A549 (cell line): ENCODE measurements at regions of chr5 and their contacts with region 1.

Region 1: GRCh38 chr5:55146543-55147151 is 13.3 kb upstream of the GPX8 start:
- DNase-seq: peak; percentile 49 to 82
- ATAC-seq: peak; percentile 92 to 98
- H3K4me3 ChIP-seq: no peak overlapping the region
- H3K27ac ChIP-seq: no peak overlapping the region
- H3K4me1 ChIP-seq: no peaks in the 10 kb centered on the region
- CTCF ChIP-seq: peak; percentile 91
- EP300 ChIP-seq: no peak
- POLR2A ChIP-seq: no peak
- RAD21 ChIP-seq: peak; percentile 84 to 92

Region 2: DNA sequence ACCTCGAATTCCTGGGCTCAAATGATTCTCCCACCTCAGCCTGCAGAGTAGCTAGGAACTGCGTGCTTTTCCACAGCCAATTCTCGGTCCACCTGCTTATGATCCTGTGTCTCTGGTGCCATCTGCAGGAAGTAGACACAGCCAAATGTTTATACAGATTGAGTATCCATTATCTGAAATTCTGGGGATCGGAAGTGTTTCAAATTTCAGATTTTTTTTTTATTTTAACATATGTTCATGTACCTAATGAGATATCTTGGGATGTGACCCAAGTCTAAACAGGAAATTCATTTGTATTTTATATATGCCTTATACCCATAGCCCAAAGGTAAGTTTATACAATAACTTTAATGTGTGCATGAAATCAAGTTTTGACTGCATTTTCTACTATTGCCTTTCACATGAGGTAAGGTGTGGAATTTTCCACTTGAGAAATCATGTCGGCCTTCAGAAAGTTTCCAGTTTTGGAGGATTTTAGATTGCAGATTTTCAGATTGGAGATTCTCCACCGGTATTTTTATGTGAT is 250.8 kb before region 1 on chr5:
- CTCF ChIA-PET with region 1: interaction called, 83 read pairs
- POLR2A ChIA-PET with region 1: no interaction called
- DNase-seq: peak; percentile 14 to 49
- ATAC-seq: peak; percentile 85 to 89
- H3K4me3 ChIP-seq: no peak overlapping the region
- H3K27ac ChIP-seq: no peak overlapping the region
- H3K4me1 ChIP-seq: no peaks in the 10 kb centered on the region
- CTCF ChIP-seq: peak; percentile 52
- EP300 ChIP-seq: no peak
- POLR2A ChIP-seq: no peak
- RAD21 ChIP-seq: peak; percentile 55 to 62; a peak in 4 of 5 replicates

Region 3: DNA sequence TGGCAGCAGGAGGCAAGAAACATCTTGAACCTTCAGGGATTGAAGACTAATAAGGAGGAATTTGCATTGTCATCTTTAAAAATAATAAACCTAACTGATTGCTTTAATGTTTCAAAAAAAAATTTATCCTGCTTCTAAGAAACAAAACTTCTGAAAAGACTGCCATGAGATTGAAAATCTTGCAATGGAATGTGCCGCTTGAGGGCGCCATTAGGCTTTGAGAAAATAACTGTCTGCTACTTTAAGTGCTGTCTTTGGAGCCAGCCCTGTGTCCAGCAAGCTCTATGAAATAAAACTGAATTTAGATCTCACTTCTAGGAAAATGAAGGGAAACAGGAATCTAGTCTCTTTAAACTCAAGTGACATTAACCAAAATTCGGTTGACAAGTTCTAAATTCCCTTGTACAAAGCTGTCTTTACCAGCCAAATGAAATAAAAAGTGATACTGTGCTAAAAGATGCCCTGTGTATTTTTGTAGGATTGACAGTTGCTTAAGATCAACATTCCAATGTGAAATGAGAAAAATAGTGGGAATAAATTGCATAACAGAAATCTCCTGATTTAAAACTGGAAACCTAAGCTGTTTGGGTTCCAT is 240.6 kb before region 1 on chr5:
- CTCF ChIA-PET with region 1: interaction called, 83 read pairs
- POLR2A ChIA-PET with region 1: no interaction called
- DNase-seq: peak; percentile 42 to 56
- ATAC-seq: peak in 1 of 2 experiments; percentile 73; a peak in 3 of 6 replicates
- H3K4me3 ChIP-seq: no peak overlapping the region
- H3K27ac ChIP-seq: no peak overlapping the region
- H3K4me1 ChIP-seq: no peaks in the 10 kb centered on the region
- CTCF ChIP-seq: peak; percentile 70
- EP300 ChIP-seq: no peak
- POLR2A ChIP-seq: no peak
- RAD21 ChIP-seq: peak; percentile 74 to 79

Region 4: DNA sequence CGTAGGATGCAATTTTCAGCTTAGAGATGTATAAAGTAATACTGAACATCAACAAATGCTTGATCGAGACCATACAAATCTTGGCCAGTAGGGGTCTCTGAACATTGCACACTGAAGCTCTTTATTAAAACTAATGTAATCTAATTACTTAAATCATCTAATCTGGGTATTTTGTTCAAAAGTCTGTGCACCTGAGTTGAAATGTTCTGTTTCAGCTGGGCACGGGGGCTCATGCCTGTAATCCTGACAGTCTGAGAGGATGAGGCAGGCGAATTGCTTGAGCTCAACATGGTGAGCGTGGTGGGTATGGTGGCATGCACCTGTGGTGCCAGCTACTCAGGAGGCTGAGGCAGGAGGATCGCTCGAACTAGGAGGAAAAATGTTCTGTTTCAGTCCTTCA is 202.3 kb before region 1 on chr5:
- CTCF ChIA-PET with region 1: interaction called, 12 read pairs
- POLR2A ChIA-PET with region 1: no interaction called
- DNase-seq: peak; percentile 19 to 22
- ATAC-seq: peak; percentile 54 to 75; a peak in 3 of 6 replicates
- H3K4me3 ChIP-seq: no peak overlapping the region
- H3K27ac ChIP-seq: no peak overlapping the region
- H3K4me1 ChIP-seq: no peaks in the 10 kb centered on the region
- CTCF ChIP-seq: peak; percentile 65
- EP300 ChIP-seq: no peak
- POLR2A ChIP-seq: no peak
- RAD21 ChIP-seq: peak; percentile 40 to 41; a peak in 4 of 5 replicates

Region 5: DNA sequence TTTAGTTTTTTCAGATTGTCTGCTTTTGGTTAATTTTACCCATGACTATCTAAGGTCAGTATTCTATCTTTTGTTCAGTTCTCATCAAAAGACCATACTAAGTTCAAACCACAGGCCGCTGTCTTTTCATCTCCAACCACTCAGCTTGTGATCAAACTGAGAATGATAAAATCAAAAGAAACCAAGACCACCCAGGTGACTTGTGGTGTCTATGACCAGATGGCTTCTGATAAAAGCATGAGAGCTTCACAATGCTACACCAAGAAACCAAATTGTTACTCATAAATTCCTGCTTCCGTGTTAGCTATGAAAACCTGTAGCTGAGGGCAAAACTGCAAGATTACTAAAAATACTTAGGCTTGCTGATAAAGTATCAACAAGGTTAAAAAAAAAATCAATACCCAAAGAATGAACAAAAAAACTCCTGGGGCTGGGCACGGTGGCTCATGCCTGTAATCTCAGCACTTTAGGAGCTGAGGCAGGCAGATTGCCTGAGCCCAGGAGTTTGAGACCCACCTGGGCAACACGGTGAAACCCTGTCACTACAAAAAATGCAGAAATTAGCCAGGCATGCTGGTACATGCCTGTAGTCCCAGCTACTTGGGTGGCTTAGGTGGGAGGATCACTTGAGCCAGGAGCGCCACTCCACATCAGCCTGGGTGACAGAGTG is 12.5 kb before region 1 on chr5:
- CTCF ChIA-PET with region 1: interaction called, 16 read pairs
- POLR2A ChIA-PET with region 1: no interaction called
- DNase-seq: no peak
- ATAC-seq: no peak
- H3K4me3 ChIP-seq: no peak overlapping the region
- H3K27ac ChIP-seq: no peak overlapping the region
- H3K4me1 ChIP-seq: no peaks in the 10 kb centered on the region
- CTCF ChIP-seq: no peak
- EP300 ChIP-seq: no peak
- POLR2A ChIP-seq: no peak
- RAD21 ChIP-seq: no peak

Region 6: DNA sequence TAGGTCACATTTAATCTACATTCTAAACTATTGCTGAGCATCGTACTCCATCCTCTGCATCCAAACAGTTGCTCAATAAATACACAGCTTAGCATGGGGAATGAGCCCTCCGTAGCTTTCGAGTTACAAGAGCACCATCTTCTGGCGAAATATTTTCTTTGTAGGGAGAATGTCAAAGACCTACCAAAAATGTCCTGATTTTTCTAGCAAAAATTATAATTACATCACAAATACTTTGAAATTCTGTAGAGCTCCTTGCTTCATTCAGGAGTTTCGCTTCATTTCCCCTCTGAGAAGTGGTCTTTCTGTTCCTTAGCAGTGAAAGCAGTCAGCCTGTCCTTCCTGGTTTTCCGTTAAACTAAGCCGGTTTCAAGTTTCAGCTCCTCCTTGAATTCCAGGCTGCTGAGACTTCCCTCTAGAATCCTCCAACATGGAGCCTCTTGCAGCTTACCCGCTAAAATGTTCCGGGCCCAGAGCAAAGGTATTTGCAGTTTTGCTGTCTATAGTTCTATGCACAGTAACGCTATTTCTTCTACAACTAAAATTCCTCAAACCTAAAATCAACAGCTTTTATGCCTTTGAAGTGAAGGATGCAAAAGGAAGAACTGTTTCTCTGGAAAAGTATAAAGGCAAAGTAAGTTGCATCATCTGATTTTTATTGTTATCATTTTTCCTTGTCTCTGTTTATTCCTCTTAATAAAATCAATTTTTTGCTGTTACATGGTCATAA is 13.3 kb after region 1 on chr5 and contains the start of gene GPX8:
- CTCF ChIA-PET with region 1: interaction called, 19 read pairs
- POLR2A ChIA-PET with region 1: no interaction called
- DNase-seq: peak; percentile 76 to 88
- ATAC-seq: peak; percentile 95 to 97
- H3K4me3 ChIP-seq: peak within 1 kb of the TSS; percentile 54
- H3K27ac ChIP-seq: peak within 1 kb of the TSS; percentile 85 to 87
- H3K4me1 ChIP-seq: peaks cover 7% of the 10 kb centered on the region; the same call in 2 of the 3 replicates
- CTCF ChIP-seq: peak; percentile 97
- EP300 ChIP-seq: no peak
- POLR2A ChIP-seq: peak; percentile 27
- RAD21 ChIP-seq: peak; percentile 92 to 93
- polyA plus RNA-seq, gene GPX8: 67.9 and 86.0 TPM in 2 replicates

Region 7: DNA sequence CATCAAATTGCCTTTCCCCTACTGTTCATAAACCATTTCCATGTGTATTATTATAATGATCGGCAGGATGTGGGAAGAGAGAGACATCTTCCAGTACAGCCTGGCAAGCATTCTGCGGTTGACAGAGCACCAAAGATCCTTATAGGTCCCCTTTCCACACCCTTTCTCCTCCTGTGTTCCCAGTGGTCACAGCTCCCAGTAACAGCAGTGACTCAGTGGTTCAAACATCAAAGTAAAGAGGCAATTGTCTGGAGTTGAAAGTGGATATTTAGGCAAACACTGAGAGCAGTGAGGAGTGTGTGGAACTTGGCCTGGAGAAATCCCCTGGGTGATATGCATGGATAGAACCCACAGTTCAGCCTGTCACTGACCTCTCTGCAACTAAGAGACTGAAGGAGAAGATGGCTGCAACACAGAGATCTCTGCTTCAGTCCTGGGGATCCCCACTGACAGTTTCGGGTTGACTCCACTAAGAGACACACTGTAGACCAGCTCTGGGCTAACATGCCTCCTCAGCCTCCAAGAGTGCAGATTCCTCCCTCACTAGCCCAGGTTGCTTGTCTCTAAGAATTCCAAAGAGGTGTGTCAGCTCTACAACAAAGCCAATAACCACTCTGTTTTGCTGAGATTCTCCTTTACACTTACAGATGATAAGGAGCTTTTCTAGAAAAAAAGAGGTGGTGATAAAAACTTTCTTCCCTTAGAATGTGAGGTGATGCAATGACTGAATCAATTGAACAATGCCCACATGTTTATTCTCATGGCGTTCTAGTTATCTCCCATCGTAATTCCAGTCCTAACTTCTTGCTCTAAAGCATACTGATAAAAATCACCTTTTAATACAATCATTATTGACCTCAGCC is 942.6 kb after region 1 on chr5:
- CTCF ChIA-PET with region 1: no interaction called
- POLR2A ChIA-PET with region 1: no interaction called
- DNase-seq: peak; percentile 31 to 47
- ATAC-seq: peak; percentile 78 to 86; a peak in 4 of 6 replicates
- H3K4me3 ChIP-seq: no peak overlapping the region
- H3K27ac ChIP-seq: peak overlapping the region; percentile 60 to 79
- H3K4me1 ChIP-seq: peaks cover 34% of the 10 kb centered on the region
- CTCF ChIP-seq: no peak
- EP300 ChIP-seq: no peak
- POLR2A ChIP-seq: no peak
- RAD21 ChIP-seq: no peak